ENCODE measurements at regions of chr10 and their contacts with region 1.

Region 1: GRCh38 chr10:22003079-22003913 is at the start of gene DNAJC1:
- DNase-seq: peak; percentile 99 to 100
- H3K4me3 ChIP-seq: peak within 1 kb of the TSS; percentile 83
- H3K4me3 Mint-ChIP-seq: peak within 1 kb of the TSS; percentile 86
- H3K27ac Mint-ChIP-seq: peak within 1 kb of the TSS; percentile 83
- H3K4me1 ChIP-seq: peaks cover 14% of the 10 kb centered on the region
- H3K4me1 Mint-ChIP-seq: peaks cover 8% of the 10 kb centered on the region
- H3K27me3 ChIP-seq: no peaks in the 10 kb centered on the region
- H3K27me3 Mint-ChIP-seq: peaks cover 14% of the 10 kb centered on the region
- CTCF ChIP-seq: no peak
- total RNA-seq, gene DNAJC1: 50.7 and 54.2 TPM in 2 replicates

Region 2: DNA sequence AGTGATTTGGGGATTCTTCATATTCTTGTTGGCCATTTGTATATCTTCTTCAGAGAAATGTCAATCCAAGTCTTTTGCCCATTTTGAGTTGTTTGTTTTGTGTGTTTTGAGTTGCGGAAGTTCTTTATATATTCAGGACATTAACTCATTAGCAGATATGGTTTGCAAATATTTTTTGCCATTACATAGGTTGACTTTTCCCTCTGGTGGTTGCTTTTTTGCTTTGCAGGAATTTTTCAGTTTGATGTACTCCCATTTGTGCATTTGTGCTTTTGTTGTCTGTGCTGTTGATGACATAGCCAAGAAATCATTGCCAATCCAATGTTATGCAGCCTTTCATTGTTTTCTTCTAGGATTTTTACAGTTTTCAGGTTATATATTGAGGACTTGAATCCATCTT is 63.8 kb after region 1 on chr10:
- CTCF ChIA-PET with region 1: no interaction called
- POLR2A ChIA-PET with region 1: no interaction called
- intact Hi-C with region 1: loop called (anchors 2 kb)
- DNase-seq: no peak
- H3K4me3 ChIP-seq: no peak overlapping the region
- H3K4me3 Mint-ChIP-seq: no peak overlapping the region
- H3K27ac Mint-ChIP-seq: no peak overlapping the region
- H3K4me1 ChIP-seq: no peaks in the 10 kb centered on the region
- H3K4me1 Mint-ChIP-seq: no peaks in the 10 kb centered on the region
- H3K27me3 ChIP-seq: no peaks in the 10 kb centered on the region
- H3K27me3 Mint-ChIP-seq: peaks cover 14% of the 10 kb centered on the region
- CTCF ChIP-seq: no peak

Region 3: GRCh38 chr10:22228943-22229801 is 225.9 kb after region 1 on chr10:
- CTCF ChIA-PET with region 1: no interaction called
- POLR2A ChIA-PET with region 1: no interaction called
- intact Hi-C with region 1: loop called (anchors 2 kb)
- DNase-seq: peak; percentile 88 to 93
- H3K4me3 ChIP-seq: peak overlapping the region; percentile 89
- H3K4me3 Mint-ChIP-seq: peak overlapping the region; percentile 80
- H3K27ac Mint-ChIP-seq: peak overlapping the region; percentile 98
- H3K4me1 ChIP-seq: peaks cover 9% of the 10 kb centered on the region; the same call in 1 of the 2 replicates
- H3K4me1 Mint-ChIP-seq: no peaks in the 10 kb centered on the region
- H3K27me3 ChIP-seq: no peaks in the 10 kb centered on the region
- H3K27me3 Mint-ChIP-seq: peaks cover 8% of the 10 kb centered on the region
- CTCF ChIP-seq: no peak

Measured in Caco-2 (cell line).